ENCODE measurements at regions of chr11 and their contacts with region 1.

Region 1: DNA sequence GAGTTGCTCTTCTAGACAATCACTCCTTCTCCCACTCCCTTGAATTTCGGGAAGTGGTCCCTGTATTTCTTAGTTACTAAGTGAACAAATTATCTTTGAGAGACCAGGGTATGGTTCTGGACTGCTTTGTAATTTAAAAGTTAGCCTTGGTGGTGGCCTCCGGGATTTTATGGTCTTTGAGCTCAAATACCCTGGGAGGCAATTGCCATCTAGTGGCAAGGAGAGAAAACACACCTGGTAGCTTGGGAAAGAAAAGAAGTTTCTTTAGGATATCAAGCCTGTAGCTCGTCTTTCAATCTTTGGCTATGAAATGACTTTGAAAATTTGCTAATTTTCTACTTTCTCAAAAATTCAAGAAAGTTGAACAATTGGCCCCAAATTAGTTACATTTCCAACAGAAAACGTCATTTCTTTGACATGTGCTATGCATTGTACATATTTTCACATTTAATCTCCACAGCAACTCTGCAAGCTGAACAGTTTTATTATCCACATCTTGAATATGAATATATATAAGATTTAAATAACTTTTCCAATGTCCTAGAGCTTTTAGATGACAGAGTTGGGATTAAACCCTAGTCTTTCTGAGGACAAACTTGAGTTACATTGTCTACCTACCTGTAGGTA is 39.1 kb downstream of the MMP27 start:
- DNase-seq: peak; percentile 63
- H3K4me3 Mint-ChIP-seq: no peak overlapping the region
- H3K27ac Mint-ChIP-seq: no peak overlapping the region
- H3K4me1 Mint-ChIP-seq: no peaks in the 10 kb centered on the region
- H3K27me3 Mint-ChIP-seq: no peaks in the 10 kb centered on the region
- CTCF ChIP-seq: peak; percentile 89

Region 2: GRCh38 chr11:102287964-102288724 is 378.3 kb before region 1 on chr11:
- CTCF ChIA-PET with region 1: interaction called, 16 read pairs
- POLR2A ChIA-PET with region 1: no interaction called
- intact Hi-C with region 1: loop called (anchors 5 kb)
- DNase-seq: peak; percentile 80
- H3K4me3 Mint-ChIP-seq: no peak overlapping the region
- H3K27ac Mint-ChIP-seq: no peak overlapping the region
- H3K4me1 Mint-ChIP-seq: peaks cover 19% of the 10 kb centered on the region
- H3K27me3 Mint-ChIP-seq: no peaks in the 10 kb centered on the region
- CTCF ChIP-seq: peak; percentile 63

Region 3: DNA sequence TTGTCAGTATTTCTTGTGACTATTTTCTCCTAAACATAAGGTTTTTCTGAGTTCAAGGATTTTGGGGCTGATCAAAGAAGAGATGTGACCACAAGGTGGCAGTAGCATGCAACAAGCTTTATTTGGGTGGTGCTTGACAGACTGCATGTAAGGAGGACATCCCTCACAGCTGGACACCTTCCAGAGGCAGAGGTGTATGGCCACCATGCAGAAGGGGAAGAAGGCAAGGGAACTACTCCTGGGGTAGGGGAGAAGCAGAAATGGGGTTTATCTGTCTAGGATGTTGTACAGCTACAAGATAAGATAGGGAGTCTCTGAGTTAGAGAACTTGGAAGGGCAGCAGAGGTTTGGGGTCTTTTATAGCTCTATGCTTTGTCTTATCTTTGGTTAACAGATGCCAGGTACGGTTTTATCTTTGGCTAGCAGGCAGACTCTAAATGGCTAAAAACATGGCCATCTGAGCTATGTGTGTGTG is 324.6 kb before region 1 on chr11:
- CTCF ChIA-PET with region 1: interaction called, 30 read pairs
- POLR2A ChIA-PET with region 1: interaction called, 4 read pairs
- intact Hi-C with region 1: loop called (anchors 1 kb)
- DNase-seq: peak; percentile 91
- H3K4me3 Mint-ChIP-seq: no peak overlapping the region
- H3K27ac Mint-ChIP-seq: no peak overlapping the region
- H3K4me1 Mint-ChIP-seq: peaks cover 40% of the 10 kb centered on the region
- H3K27me3 Mint-ChIP-seq: no peaks in the 10 kb centered on the region
- CTCF ChIP-seq: peak; percentile 67

Region 4: GRCh38 chr11:102495161-102496042 is 171.0 kb before region 1 on chr11:
- CTCF ChIA-PET with region 1: interaction called, 11 read pairs
- POLR2A ChIA-PET with region 1: no interaction called
- intact Hi-C with region 1: loop called (anchors 1 kb)
- DNase-seq: peak; percentile 93
- H3K4me3 Mint-ChIP-seq: no peak overlapping the region
- H3K27ac Mint-ChIP-seq: no peak overlapping the region
- H3K4me1 Mint-ChIP-seq: peaks cover 17% of the 10 kb centered on the region
- H3K27me3 Mint-ChIP-seq: no peaks in the 10 kb centered on the region
- CTCF ChIP-seq: no peak

Region 5: DNA sequence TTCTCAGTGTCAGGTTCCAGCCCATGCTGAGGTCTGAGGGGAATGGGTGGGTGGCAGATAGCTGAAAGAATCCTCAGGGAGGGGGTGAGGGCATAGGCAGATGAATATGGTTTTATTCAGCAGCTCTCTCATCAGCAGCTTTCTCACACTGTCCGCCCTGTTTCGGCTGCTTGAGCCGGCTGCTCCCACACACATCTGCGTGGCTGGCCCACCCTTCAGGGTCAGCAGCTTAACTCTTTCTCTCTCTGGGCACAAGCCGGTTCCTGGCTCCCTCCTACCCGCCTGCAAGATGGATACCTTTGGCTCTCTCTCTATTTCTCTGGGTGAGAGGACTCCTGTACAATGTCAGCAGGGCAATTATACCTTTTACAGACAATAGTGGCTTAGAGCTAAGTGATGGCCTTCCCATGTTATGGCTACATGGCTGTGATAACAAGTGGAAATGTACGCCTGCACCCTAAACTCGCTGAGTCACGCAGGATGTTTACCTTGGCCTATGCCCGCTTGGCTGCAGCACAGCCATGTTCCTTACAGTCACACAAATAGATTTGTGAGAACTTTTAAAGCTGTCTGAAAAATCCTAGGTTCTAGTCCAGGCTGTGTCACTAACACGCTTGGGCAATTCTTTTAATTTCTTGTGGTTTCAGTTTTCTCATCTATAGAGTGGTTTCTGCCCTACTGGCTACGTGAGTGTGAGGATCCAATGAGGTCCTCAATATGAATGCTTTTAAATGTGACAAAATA is 45.5 kb before region 1 on chr11:
- CTCF ChIA-PET with region 1: interaction called, 58 read pairs
- POLR2A ChIA-PET with region 1: no interaction called
- intact Hi-C with region 1: no loop called
- DNase-seq: peak; percentile 79
- H3K4me3 Mint-ChIP-seq: no peak overlapping the region
- H3K27ac Mint-ChIP-seq: no peak overlapping the region
- H3K4me1 Mint-ChIP-seq: peaks cover 8% of the 10 kb centered on the region
- H3K27me3 Mint-ChIP-seq: no peaks in the 10 kb centered on the region
- CTCF ChIP-seq: no peak

Region 6: GRCh38 chr11:102680945-102681344 is 14.5 kb after region 1 on chr11:
- CTCF ChIA-PET with region 1: interaction called, 60 read pairs
- POLR2A ChIA-PET with region 1: no interaction called
- intact Hi-C with region 1: no loop called
- DNase-seq: peak; percentile 36
- H3K4me3 Mint-ChIP-seq: no peak overlapping the region
- H3K27ac Mint-ChIP-seq: no peak overlapping the region
- H3K4me1 Mint-ChIP-seq: peaks cover 10% of the 10 kb centered on the region
- H3K27me3 Mint-ChIP-seq: no peaks in the 10 kb centered on the region
- CTCF ChIP-seq: no peak

Region 7: DNA sequence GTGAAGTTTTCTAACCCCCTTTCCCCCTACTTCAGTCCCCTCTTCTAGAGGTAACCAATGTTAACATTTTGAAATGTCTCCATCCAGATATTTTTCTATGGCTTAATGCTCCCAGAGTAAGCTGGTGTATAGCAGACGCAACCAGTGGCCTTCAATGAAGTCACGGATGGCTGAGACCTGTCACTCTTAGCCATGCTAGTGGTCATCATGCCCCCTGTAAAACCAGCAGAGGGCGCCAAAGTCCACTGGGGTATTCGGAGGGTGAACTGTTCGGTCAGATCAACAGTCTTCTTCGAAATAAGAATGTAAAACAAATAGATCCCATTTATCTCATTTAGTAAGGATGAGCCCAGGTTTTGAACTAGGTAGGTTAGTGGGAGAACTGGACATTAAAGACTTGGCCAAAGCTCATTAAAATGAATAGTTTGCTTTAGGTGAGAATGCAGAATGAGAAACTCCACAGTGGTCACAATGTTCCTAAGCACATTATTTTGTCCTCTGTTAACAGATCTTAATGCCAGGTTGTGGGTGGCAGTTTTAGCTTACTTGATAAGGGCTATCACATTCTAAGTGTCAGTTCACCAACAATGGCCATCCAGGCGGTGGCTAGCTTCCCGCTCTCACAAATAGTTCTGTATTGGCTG is 66.9 kb after region 1 on chr11:
- CTCF ChIA-PET with region 1: no interaction called
- POLR2A ChIA-PET with region 1: no interaction called
- intact Hi-C with region 1: no loop called
- DNase-seq: peak; percentile 82
- H3K4me3 Mint-ChIP-seq: no peak overlapping the region
- H3K27ac Mint-ChIP-seq: no peak overlapping the region
- H3K4me1 Mint-ChIP-seq: peaks cover 5% of the 10 kb centered on the region
- H3K27me3 Mint-ChIP-seq: no peaks in the 10 kb centered on the region
- CTCF ChIP-seq: peak; percentile 86

Region 8: DNA sequence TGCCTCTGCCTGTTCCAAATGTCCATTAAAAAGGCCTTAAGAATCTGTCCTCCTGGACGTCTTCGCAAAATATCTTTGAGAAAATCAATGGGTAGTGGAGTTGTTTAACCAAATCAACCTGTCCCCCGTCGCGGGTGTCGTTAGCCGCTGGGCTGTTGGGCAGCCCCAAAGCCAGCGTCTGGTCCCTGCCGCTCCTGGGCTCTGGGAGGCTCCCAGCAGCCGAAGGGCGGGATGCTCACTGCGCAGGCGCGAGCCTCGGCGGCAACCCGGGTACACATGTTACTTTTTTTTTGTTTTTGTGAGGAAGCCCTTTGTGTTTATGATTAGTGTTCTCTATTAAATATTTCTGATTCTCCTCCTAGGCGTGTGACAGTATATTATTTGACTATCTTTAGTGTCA is 101.4 kb after region 1 on chr11:
- CTCF ChIA-PET with region 1: no interaction called
- POLR2A ChIA-PET with region 1: no interaction called
- intact Hi-C with region 1: no loop called
- DNase-seq: no peak
- H3K4me3 Mint-ChIP-seq: no peak overlapping the region
- H3K27ac Mint-ChIP-seq: no peak overlapping the region
- H3K4me1 Mint-ChIP-seq: peaks cover 6% of the 10 kb centered on the region
- H3K27me3 Mint-ChIP-seq: no peaks in the 10 kb centered on the region
- CTCF ChIP-seq: no peak